ENCODE measurements at regions of chr17 and their contacts with region 1.

Region 1: DNA sequence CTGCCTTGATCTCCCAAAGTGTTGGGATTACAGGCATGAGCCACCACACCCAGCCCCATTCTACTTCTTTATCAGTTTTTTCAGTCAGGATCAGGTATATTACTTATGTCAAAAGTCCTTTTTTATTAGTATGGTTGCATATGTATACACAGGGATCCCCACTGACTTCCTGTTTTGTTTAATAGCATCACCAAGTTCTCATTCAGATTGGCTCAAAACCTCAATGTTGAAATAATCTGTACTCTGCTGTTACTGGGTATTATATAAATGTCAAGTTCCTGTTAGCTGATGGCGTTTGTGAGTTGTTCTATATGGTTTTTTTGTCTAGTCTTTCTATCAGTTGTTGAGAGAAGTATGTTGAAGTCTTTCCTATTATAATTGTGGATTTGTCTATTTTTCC is 168.5 kb downstream of the BCAS3 start:
- DNase-seq: no peak
- ATAC-seq: no peak

Region 2: DNA sequence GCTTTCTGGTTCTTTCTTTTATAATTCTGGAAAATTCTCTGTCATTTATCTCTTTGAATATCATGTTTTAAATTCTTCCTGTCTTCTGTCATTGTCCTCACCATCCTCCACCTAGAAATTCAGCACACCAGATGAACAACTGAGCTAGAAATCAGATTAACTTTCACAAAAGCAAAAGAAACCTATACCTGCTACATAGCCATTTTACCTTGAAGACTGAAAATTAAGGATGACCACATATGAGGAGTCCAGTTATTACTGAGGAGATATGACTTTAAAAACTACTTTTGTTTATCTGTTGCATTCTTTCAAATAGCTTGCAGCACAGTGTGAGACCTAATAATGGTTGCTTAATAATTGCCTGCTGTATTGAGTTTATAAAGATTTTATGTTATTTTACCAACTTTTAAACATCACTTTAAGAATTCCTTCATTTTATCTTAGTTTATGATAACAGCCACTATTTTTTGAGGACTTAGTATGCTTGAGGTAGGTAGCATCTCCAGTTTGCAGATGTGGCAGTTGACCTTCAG is 64.2 kb before region 1 on chr17:
- intact Hi-C with region 1: loop called in 1 of 2 experiments (anchors 10 kb)
- DNase-seq: no peak
- ATAC-seq: no peak